Uterus (tissue), 4 donors: ENCODE measurements at regions of chr19 and their contacts with region 1.

Region 1: GRCh38 chr19:19488875-19489690 is 26.3 kb downstream of the TSSK6 start:
- DNase-seq: peak; percentile 76 to 83
- H3K4me3 ChIP-seq: no peak overlapping the region
- H3K27ac ChIP-seq: peak overlapping the region; percentile 66 to 78
- H3K4me1 ChIP-seq: peaks cover 6 to 39% of the 10 kb centered on the region in 2 donors
- H3K27me3 ChIP-seq: no peaks in the 10 kb centered on the region
- CTCF ChIP-seq: no peak
- POLR2A ChIP-seq: no peak

Region 2: GRCh38 chr19:19366612-19367396 is 122.3 kb before region 1 on chr19:
- intact Hi-C with region 1: loop called (anchors 5 kb)
- DNase-seq: peak; percentile 42 to 53
- H3K4me3 ChIP-seq: no peak overlapping the region
- H3K27ac ChIP-seq: no peak overlapping the region
- H3K4me1 ChIP-seq: no peaks in the 10 kb centered on the region
- H3K27me3 ChIP-seq: no peaks in the 10 kb centered on the region
- CTCF ChIP-seq: peak; percentile 84 to 93 (median 86)
- POLR2A ChIP-seq: no peak